PC-3 (cell line): ENCODE measurements at regions of chr2 and their contacts with region 1.

Region 1: GRCh38 chr2:149597668-149598326 is 10.2 kb upstream of the MMADHC start:
- DNase-seq: peak; percentile 94
- ATAC-seq: peak; percentile 77
- H3K4me3 ChIP-seq: peak overlapping the region; percentile 59
- H3K27ac ChIP-seq: peak overlapping the region; percentile 83
- H3K4me1 ChIP-seq: peaks cover 41% of the 10 kb centered on the region
- H3K27me3 ChIP-seq: no peaks in the 10 kb centered on the region
- CTCF ChIP-seq: peak; percentile 90

Region 2: GRCh38 chr2:149463328-149464002 is 134.3 kb before region 1 on chr2:
- CTCF ChIA-PET with region 1: no interaction called
- POLR2A ChIA-PET with region 1: no interaction called
- intact Hi-C with region 1: no loop called
- DNase-seq: peak; percentile 5
- ATAC-seq: peak; percentile 31; the same call in 1 of the 2 replicates
- H3K4me3 ChIP-seq: no peak overlapping the region
- H3K27ac ChIP-seq: no peak overlapping the region
- H3K4me1 ChIP-seq: no peaks in the 10 kb centered on the region
- H3K27me3 ChIP-seq: no peaks in the 10 kb centered on the region
- CTCF ChIP-seq: no peak

Region 3: DNA sequence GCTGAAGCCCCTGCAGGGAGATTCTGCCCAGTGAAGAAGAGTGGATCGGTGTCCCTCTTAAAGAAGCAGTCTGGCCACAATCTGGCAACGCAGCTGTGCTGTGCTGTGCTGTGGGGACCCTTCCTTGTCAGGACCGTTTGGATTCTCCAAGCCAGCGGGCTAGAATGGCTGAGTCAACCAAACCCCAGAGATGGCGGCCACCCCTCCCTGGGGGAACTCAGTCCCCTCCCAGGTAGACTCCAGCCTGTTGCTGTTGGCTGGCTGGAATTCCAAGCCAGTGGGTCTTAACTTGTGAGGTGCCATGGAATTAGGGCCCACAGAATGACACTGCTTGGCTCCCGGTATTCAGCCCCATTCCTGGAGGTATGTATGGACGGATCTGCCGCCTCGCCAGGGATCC is 72.5 kb before region 1 on chr2:
- CTCF ChIA-PET with region 1: no interaction called
- POLR2A ChIA-PET with region 1: no interaction called
- intact Hi-C with region 1: no loop called
- DNase-seq: no peak
- ATAC-seq: no peak
- H3K4me3 ChIP-seq: no peak overlapping the region
- H3K27ac ChIP-seq: no peak overlapping the region
- H3K4me1 ChIP-seq: peaks cover 15% of the 10 kb centered on the region; the same call in 1 of the 2 replicates
- H3K27me3 ChIP-seq: peaks cover 13% of the 10 kb centered on the region; the same call in 1 of the 2 replicates
- CTCF ChIP-seq: no peak

Region 4: DNA sequence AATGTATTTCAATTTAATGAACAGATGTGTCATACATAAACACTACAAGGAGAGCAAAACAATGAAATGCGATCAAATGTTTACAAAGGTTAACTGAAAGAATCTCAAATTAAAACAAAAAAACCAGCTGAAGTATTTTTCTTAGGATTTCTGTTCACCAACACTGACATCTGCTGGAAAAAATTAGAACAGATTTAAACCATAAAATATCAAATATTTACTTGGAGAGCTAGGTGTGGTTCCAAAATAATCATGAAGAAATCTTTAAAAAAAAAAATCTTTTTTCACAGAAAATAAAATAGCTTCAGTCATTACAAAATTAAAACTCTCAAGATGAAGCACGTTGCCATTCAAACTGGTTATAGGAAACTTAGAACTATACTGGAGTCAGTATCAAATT is 24.0 kb before region 1 on chr2:
- CTCF ChIA-PET with region 1: no interaction called
- POLR2A ChIA-PET with region 1: no interaction called
- intact Hi-C with region 1: no loop called
- DNase-seq: peak; percentile 46
- ATAC-seq: no peak
- H3K4me3 ChIP-seq: no peak overlapping the region
- H3K27ac ChIP-seq: no peak overlapping the region
- H3K4me1 ChIP-seq: no peaks in the 10 kb centered on the region
- H3K27me3 ChIP-seq: no peaks in the 10 kb centered on the region
- CTCF ChIP-seq: peak; percentile 59

Region 5: GRCh38 chr2:149715005-149715592 is 117.3 kb after region 1 on chr2:
- CTCF ChIA-PET with region 1: interaction called, 3 read pairs
- POLR2A ChIA-PET with region 1: no interaction called
- intact Hi-C with region 1: loop called (anchors 1 kb)
- DNase-seq: peak; percentile 74
- ATAC-seq: peak; percentile 98
- H3K4me3 ChIP-seq: no peak overlapping the region
- H3K27ac ChIP-seq: no peak overlapping the region
- H3K4me1 ChIP-seq: no peaks in the 10 kb centered on the region; the same call in 1 of the 2 replicates
- H3K27me3 ChIP-seq: no peaks in the 10 kb centered on the region
- CTCF ChIP-seq: peak; percentile 82

Region 6: GRCh38 chr2:149908726-149909683 is 311.2 kb after region 1 on chr2:
- CTCF ChIA-PET with region 1: no interaction called
- POLR2A ChIA-PET with region 1: no interaction called
- intact Hi-C with region 1: loop called (anchors 10 kb)
- DNase-seq: peak; percentile 75
- ATAC-seq: peak; percentile 98
- H3K4me3 ChIP-seq: no peak overlapping the region
- H3K27ac ChIP-seq: peak overlapping the region; percentile 28
- H3K4me1 ChIP-seq: peaks cover 14% of the 10 kb centered on the region
- H3K27me3 ChIP-seq: no peaks in the 10 kb centered on the region
- CTCF ChIP-seq: no peak

Region 7: GRCh38 chr2:150167711-150168110 is 569.9 kb after region 1 on chr2:
- CTCF ChIA-PET with region 1: no interaction called
- POLR2A ChIA-PET with region 1: interaction called, 3 read pairs
- intact Hi-C with region 1: loop called (anchors 1 kb)
- DNase-seq: peak; percentile 95
- ATAC-seq: peak; percentile 71
- H3K4me3 ChIP-seq: no peak overlapping the region; the same call in 1 of the 2 replicates
- H3K27ac ChIP-seq: peak overlapping the region; percentile 96
- H3K4me1 ChIP-seq: peaks cover 52% of the 10 kb centered on the region
- H3K27me3 ChIP-seq: no peaks in the 10 kb centered on the region
- CTCF ChIP-seq: no peak

Region 8: DNA sequence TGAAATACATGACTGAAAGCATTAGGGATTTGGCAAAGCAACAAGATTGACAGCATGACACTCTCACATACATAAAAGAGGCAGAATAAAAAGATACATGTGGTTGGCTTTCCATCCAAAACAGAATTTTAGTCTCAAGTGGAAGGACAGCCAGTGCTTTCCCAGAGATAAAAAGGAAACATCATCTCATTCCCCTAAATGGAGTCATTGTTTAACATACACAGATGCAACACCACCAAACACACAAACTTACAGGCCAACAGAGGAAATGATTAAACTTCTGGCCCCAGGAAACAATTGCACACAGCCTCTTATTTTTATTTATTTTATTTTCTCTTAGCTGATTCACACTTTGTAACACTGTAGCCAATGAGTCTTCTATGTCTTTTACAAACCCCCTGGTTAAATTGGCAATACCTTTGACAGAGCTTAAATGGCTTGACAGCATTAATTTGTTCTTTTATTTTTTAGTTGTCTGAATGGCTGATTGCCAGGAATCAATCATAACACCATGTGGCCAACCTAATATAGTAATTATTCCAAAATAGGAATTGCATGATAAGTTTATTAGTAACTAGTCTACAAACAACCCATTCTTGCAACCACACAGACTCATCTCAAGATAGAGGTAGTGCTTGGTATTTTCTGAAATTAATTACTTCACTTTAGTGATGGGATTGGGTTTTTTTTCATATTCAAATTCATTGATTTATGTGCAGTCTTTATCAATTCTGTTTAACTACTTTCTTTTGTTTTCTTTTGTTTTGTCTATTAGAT is 699.2 kb after region 1 on chr2:
- CTCF ChIA-PET with region 1: no interaction called
- POLR2A ChIA-PET with region 1: no interaction called
- intact Hi-C with region 1: loop called (anchors 5 kb)
- DNase-seq: peak; percentile 85
- ATAC-seq: peak; percentile 96
- H3K4me3 ChIP-seq: no peak overlapping the region
- H3K27ac ChIP-seq: peak overlapping the region; percentile 77
- H3K4me1 ChIP-seq: peaks cover 28% of the 10 kb centered on the region
- H3K27me3 ChIP-seq: no peaks in the 10 kb centered on the region
- CTCF ChIP-seq: no peak

Region 9: GRCh38 chr2:150610671-150611279 is 1013.0 kb after region 1 on chr2:
- CTCF ChIA-PET with region 1: no interaction called
- POLR2A ChIA-PET with region 1: no interaction called
- intact Hi-C with region 1: loop called (anchors 2 kb)
- DNase-seq: peak; percentile 85
- ATAC-seq: peak; percentile 70
- H3K4me3 ChIP-seq: no peak overlapping the region
- H3K27ac ChIP-seq: 0 out of 2 replicates have a peak overlapping the region, but pooled peaks have one; percentile 6
- H3K4me1 ChIP-seq: peaks cover 19% of the 10 kb centered on the region
- H3K27me3 ChIP-seq: no peaks in the 10 kb centered on the region
- CTCF ChIP-seq: peak; percentile 85